Endothelial cell of umbilical vein (primary cell): ENCODE measurements at regions of chr10 and their contacts with region 1.

Region 1: DNA sequence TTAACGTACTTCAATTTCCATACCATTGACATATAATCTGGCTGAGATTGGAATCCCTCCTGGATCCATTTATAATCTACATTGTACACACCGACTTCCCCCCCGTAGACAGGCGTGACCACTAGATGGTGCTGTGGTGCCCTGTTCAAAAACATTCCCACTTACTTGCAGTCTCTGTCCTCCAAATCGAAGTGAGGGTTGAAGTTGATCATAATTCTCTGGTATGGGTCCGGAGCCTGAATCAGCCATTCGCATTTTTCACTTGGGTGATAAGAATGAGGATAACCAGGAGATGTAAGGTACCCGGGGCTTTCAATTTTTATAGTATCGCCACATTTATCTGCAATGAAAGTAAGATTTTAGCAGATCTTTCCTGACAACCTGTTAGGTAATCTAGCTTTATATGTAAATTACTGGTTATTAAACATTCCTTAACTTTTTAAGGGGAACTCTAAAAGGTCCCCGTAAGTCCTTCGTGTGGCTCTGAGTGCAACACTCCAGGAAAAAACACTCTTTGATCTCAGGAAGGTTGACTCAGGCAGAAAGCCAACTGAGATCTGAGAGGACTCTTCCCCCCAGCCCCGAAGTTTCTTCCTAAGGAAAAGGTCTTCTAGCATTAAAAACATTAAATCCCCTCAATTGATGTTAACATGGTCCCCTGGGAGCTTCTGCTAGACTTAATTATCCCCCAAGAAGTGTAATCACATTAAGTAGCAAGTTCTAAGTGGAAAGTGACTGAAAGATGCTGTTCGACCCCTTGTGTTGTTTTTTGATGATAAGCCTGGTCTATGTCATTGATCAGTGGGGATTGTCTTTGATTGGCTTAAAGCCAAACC is 3.7 kb downstream of the NRP1 start:
- DNase-seq: peak; percentile 92
- H3K4me3 ChIP-seq: peak overlapping the region; percentile 90 to 100 (median 97)
- H3K27ac ChIP-seq: peak overlapping the region; percentile 84
- H3K4me1 ChIP-seq: peaks cover 45% of the 10 kb centered on the region
- H3K27me3 ChIP-seq: no peaks in the 10 kb centered on the region
- CTCF ChIP-seq: peak; percentile 69 to 88
- POLR2A ChIP-seq: no peak

Region 2: DNA sequence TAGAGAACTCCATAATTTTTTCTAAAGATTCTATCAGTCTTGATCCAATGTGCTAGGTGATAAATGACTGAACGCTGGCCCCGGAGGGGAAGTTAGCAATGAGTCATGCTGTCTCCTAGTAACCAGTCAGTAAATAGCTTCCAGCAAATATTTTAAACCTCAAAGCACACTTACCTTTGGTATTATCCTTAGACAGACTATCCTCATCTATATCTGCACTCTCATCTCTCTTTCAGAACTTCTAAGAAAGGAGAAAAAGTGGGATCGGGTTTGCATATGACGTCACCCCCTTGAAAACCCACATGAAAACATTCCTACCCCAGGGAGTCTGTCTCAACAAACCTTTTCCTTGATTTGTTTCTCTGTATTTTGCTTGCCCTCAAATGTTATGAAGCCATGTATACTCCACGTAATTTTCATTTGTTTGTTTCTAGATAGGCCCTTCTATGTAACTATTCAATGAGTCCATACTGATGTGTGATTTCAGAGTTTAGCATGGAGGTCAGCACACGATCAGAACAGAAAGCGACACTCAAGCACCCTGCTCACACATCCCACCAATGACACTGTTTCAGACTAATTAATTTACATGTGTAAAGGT is 178.6 kb after region 1 on chr10:
- CTCF ChIA-PET with region 1: interaction called, 3 read pairs
- POLR2A ChIA-PET with region 1: interaction called, 5 read pairs
- dilution Hi-C with region 1: no loop called
- intact Hi-C with region 1: loop called (anchors 5 kb)
- DNase-seq: peak; percentile 95
- H3K4me3 ChIP-seq: no peak overlapping the region
- H3K27ac ChIP-seq: peak overlapping the region; percentile 68
- H3K4me1 ChIP-seq: peaks cover 14% of the 10 kb centered on the region
- H3K27me3 ChIP-seq: no peaks in the 10 kb centered on the region
- CTCF ChIP-seq: no peak
- POLR2A ChIP-seq: no peak

Region 3: DNA sequence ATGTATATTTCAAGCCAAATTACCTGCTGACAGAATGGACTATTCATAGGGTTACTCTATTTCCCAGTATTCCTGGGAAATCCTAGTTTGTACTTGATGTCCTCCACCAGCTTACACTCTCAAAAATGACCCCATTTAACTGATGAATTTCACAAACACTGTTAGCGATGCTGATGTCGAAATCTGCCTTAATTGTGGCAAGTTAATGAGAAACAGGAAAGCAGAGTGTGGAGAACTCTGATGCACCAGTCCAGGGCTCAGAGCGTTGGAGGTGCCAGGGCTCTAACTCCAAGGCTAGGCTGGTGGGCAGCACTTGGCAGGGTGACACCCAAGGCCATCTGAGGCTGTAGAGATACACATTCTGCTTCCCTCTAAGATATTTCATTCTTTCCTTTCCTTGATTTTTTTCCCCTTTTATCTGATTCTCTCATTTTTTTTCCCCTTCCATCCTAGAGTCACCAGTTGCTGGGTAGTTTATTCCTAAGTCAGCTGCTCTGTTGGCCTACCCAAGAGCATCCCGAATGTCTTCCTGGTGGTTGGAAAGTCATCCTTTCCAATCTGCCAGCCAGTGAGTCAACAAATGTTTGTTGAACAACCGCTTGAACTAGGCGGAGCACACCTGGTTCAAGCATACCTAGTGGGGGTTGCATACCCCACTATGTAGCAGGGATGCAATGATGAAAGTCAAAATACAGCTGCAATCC is 528.7 kb after region 1 on chr10:
- CTCF ChIA-PET with region 1: no interaction called
- POLR2A ChIA-PET with region 1: no interaction called
- dilution Hi-C with region 1: no loop called
- intact Hi-C with region 1: loop called (anchors 5 kb)
- DNase-seq: peak; percentile 21
- H3K4me3 ChIP-seq: no peak overlapping the region
- H3K27ac ChIP-seq: no peak overlapping the region
- H3K4me1 ChIP-seq: peaks cover 6% of the 10 kb centered on the region
- H3K27me3 ChIP-seq: peaks cover 0 to 2% of the 10 kb centered on the region in 2 experiments
- CTCF ChIP-seq: no peak
- POLR2A ChIP-seq: no peak

Region 4: DNA sequence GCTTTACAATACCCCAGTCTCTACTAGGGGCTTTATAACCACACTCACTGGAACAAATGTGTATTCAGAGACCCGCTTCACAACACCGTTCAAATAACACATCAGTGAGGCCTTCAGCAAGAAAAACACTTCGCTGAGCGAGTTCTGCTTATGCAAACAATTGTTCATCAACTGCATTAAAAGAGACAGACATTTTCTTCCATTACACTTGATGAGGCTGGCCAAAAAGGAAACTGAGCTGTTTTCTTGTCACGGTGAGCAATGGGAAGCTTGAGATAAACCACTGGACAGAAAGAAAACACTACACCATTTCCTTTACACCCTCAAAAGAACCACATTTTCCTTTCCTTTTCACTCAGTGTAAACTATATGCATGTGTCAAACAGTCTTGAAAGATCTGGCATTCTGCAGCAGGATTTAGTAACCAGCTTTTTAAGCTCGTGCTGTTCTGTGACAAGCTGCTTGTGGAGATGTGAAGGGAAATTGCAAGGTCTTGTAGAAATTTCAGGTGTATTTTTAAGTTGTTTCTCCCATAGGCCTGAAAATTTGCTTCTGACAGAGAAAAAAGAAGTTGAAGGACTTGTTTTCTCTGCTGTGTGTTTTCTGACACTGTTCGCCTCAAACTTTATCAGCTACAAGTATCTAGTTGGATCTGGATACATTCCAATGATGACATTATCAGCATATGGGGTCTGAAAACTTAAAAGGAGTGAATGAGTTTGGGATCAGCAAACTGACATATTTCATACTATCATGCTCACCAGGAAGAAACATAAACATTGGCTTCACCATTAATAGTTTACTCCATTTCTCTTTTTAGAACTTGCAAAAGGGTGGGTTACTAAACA is 791.2 kb after region 1 on chr10:
- CTCF ChIA-PET with region 1: no interaction called
- POLR2A ChIA-PET with region 1: no interaction called
- dilution Hi-C with region 1: no loop called
- intact Hi-C with region 1: loop called (anchors 5 kb)
- DNase-seq: peak; percentile 98
- H3K4me3 ChIP-seq: peak overlapping the region in 1 of 3 experiments; percentile 10
- H3K27ac ChIP-seq: peak overlapping the region; percentile 67
- H3K4me1 ChIP-seq: peaks cover 39% of the 10 kb centered on the region
- H3K27me3 ChIP-seq: no peaks in the 10 kb centered on the region
- CTCF ChIP-seq: no peak
- POLR2A ChIP-seq: no peak

Region 5: GRCh38 chr10:34407324-34407805 is 1076.6 kb after region 1 on chr10:
- CTCF ChIA-PET with region 1: no interaction called
- POLR2A ChIA-PET with region 1: no interaction called
- dilution Hi-C with region 1: no loop called
- intact Hi-C with region 1: loop called (anchors 2 kb)
- DNase-seq: peak; percentile 70
- H3K4me3 ChIP-seq: no peak overlapping the region
- H3K27ac ChIP-seq: no peak overlapping the region
- H3K4me1 ChIP-seq: peaks cover 24% of the 10 kb centered on the region
- H3K27me3 ChIP-seq: no peaks in the 10 kb centered on the region
- CTCF ChIP-seq: no peak
- POLR2A ChIP-seq: no peak

Region 6: DNA sequence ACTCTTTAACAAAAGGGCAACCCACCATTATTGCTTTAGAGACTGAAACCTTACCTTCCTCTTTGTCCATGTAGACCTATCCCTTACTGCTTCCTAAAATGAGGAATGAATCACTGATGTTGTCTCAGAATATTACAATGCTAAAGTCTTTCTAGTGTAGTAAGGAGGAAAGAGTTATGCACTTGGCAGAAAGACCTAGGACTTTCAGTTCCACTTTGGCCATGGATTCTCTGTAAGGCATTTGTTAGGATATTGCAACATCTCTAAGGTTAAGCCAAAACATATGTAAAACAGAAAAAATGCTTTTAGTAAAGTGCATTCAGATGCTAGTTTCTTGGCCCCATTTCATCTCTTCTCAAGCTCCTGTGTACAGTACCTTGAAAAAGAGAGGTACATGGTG is 1253.4 kb after region 1 on chr10:
- CTCF ChIA-PET with region 1: no interaction called
- POLR2A ChIA-PET with region 1: no interaction called
- dilution Hi-C with region 1: no loop called
- intact Hi-C with region 1: loop called (anchors 5 kb)
- DNase-seq: peak; percentile 31
- H3K4me3 ChIP-seq: no peak overlapping the region
- H3K27ac ChIP-seq: no peak overlapping the region
- H3K4me1 ChIP-seq: peaks cover 32% of the 10 kb centered on the region
- H3K27me3 ChIP-seq: no peaks in the 10 kb centered on the region
- CTCF ChIP-seq: no peak
- POLR2A ChIP-seq: no peak